ENCODE measurements at regions of chr10 and their contacts with region 1.

Region 1: DNA sequence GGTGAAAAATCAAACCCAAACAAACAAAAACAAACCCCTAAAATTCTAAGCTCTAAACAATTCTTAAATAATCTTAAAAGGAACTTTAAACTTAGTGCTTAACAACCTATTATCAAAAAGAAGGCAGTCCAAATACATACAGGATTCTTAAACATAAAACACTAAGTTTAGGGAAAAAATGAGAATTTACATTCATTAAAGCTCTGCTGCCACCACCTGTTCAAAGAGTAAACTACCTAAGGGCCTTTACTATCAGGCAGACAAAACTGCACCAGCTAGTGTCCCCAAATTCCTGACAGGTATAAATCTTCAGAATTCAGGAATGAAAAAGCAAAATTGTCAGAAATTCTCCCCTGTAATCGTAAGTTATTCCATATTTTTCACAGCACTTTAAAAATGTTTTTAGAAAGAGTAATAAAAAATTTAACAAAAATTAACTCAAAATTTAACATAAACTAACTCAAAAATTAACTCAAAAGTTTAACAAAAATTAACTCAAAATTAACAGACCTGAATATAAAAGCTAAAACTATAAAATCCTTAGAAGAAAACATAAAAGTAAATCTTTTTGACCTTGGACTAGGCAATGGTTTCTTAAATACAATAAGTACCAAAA is 55.1 kb downstream of the PDZD8 start:
- DNase-seq: no peak
- ATAC-seq: no peak

Region 2: DNA sequence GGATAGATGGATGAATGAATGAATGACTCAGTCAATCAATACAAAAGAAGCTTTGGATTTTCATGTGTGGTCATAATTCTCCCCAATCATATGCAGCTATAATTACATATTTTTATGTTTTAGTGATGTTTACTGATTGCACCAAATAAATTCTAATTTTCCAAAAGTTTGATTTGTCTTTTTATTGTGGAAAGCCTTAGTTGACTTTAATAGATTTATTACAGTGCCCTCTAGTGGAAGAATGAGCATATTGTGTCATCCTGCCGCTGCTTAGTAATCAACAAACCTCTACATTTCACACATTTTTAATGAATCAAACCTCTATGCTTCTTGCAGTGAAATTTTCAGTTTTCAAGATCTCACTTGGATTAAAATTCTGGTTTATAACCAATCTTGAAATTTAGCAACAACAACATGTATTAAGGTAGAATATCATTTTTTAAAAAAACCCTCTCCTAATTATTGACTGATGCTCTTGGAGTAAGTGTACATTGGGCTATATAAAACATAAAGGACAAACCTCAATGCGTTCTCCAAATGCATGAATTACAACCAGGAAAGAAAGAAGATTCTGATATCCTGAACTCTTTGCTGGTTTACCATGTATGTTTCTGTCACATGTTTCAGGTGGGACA is 830.0 kb before region 1 on chr10:
- intact Hi-C with region 1: no loop called
- DNase-seq: no peak
- ATAC-seq: no peak

Region 3: DNA sequence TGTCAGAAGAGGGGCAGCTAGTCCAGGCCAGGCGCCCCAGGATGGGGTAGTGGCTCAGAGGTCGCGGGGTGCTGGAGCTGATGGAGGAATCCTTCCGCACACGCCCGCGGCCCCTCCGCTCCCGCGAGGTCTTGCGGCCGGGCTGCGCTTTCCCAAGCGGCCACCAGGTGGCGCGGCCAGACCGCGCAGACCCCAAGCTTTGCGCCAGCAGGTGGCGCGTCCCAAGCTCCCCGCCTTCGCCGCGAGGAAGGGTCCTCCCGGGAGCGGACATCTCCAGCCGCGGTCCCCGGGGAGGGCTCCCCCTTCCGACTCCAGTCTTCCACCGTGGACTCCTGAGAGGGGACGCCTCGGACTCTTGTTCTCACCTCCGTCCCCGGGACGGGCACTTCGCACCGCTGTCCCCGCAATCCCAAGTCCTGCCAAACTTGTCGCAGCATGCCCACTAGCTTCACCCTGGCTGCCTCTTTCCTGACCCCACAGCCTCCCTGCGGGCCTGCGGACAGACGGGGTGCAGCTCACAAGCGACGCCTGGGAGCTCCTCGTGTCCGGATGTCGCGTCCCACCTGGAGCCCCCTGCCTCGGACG is 103.5 kb before region 1 on chr10:
- intact Hi-C with region 1: loop called (anchors 10 kb)
- DNase-seq: peak; percentile 82
- ATAC-seq: peak; percentile 97

Region 4: GRCh38 chr10:117399341-117400073 is 79.3 kb after region 1 on chr10:
- intact Hi-C with region 1: no loop called
- DNase-seq: no peak
- ATAC-seq: no peak